Activated CD8-positive, alpha-beta memory T cell treated with anti-CD3 and anti-CD28 coated beads, Interleukin-2, amount 10 ng/mL, durations not matched to agents 7 days and 5 days (primary cell): ENCODE measurements at regions of chr12 and their contacts with region 1.

Region 1: GRCh38 chr12:113048716-113049127 is 7.8 kb upstream of the DTX1 start:
- DNase-seq: peak; percentile 74
- ATAC-seq: peak; percentile 75
- H3K4me3 Mint-ChIP-seq: no peak overlapping the region
- H3K27ac Mint-ChIP-seq: no peak overlapping the region
- H3K4me1 Mint-ChIP-seq: no peaks in the 10 kb centered on the region
- H3K27me3 Mint-ChIP-seq: peaks cover 13% of the 10 kb centered on the region

Region 2: GRCh38 chr12:113070117-113070906 is 21.6 kb after region 1 on chr12:
- CTCF ChIA-PET with region 1: interaction called, 11 read pairs
- DNase-seq: peak; percentile 85
- ATAC-seq: peak; percentile 79
- H3K4me3 Mint-ChIP-seq: peak overlapping the region; percentile 30
- H3K27ac Mint-ChIP-seq: peak overlapping the region; percentile 71
- H3K4me1 Mint-ChIP-seq: peaks cover 41% of the 10 kb centered on the region
- H3K27me3 Mint-ChIP-seq: no peaks in the 10 kb centered on the region

Region 3: GRCh38 chr12:113092607-113093408 is 44.1 kb after region 1 on chr12:
- CTCF ChIA-PET with region 1: interaction called, 45 read pairs
- DNase-seq: no peak
- ATAC-seq: no peak
- H3K4me3 Mint-ChIP-seq: no peak overlapping the region
- H3K27ac Mint-ChIP-seq: no peak overlapping the region
- H3K4me1 Mint-ChIP-seq: peaks cover 25% of the 10 kb centered on the region
- H3K27me3 Mint-ChIP-seq: no peaks in the 10 kb centered on the region

Region 4: DNA sequence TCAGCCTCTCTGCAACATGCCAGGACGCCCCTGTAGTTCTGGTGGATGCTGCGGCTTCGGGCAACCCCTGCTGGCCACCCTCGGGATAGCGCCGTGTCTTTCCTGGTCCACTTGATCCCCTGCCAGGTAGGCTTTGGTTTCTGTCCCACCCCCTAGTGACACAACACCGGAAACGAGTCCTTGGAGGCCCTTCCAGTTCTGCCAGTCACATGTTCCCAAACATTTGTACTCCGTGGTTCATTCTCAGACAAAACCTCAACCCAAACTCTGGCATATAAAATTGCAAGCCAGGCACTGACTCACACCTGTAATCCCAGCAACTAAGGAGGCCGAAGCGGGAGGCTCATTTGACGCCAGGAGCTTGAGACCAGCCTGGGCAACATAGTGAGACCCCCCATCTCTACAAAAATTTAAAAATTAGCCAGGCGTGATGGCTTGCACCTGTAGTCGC is 49.7 kb after region 1 on chr12:
- CTCF ChIA-PET with region 1: interaction called, 45 read pairs
- DNase-seq: peak; percentile 74
- ATAC-seq: peak; percentile 80
- H3K4me3 Mint-ChIP-seq: no peak overlapping the region
- H3K27ac Mint-ChIP-seq: no peak overlapping the region
- H3K4me1 Mint-ChIP-seq: peaks cover 5% of the 10 kb centered on the region
- H3K27me3 Mint-ChIP-seq: no peaks in the 10 kb centered on the region

Region 5: GRCh38 chr12:113152835-113153814 is 104.4 kb after region 1 on chr12:
- CTCF ChIA-PET with region 1: interaction called, 22 read pairs
- DNase-seq: peak; percentile 68
- ATAC-seq: peak; percentile 85
- H3K4me3 Mint-ChIP-seq: peak overlapping the region; percentile 44
- H3K27ac Mint-ChIP-seq: no peak overlapping the region
- H3K4me1 Mint-ChIP-seq: peaks cover 21% of the 10 kb centered on the region
- H3K27me3 Mint-ChIP-seq: peaks cover 41% of the 10 kb centered on the region

Region 6: GRCh38 chr12:113174461-113175384 is 126.0 kb after region 1 on chr12:
- CTCF ChIA-PET with region 1: interaction called, 13 read pairs
- DNase-seq: peak; percentile 82
- ATAC-seq: peak; percentile 84
- H3K4me3 Mint-ChIP-seq: no peak overlapping the region
- H3K27ac Mint-ChIP-seq: no peak overlapping the region
- H3K4me1 Mint-ChIP-seq: peaks cover 2% of the 10 kb centered on the region
- H3K27me3 Mint-ChIP-seq: no peaks in the 10 kb centered on the region